Common myeloid progenitor, CD34-positive (primary cell): ENCODE measurements at regions of chr22 and their contacts with region 1.

Region 1: GRCh38 chr22:24423519-24424000 is 3.8 kb upstream of the ADORA2A start:
- DNase-seq: no peak
- H3K4me3 ChIP-seq: peak overlapping the region in 5 of 7 experiments; percentile 23 to 73 (median 63)
- H3K27ac ChIP-seq: no peak overlapping the region
- H3K4me1 ChIP-seq: peaks cover 3 to 45% (median 37%) of the 10 kb centered on the region in 4 experiments
- H3K27me3 ChIP-seq: peaks cover 0 to 11% (median 0%) of the 10 kb centered on the region in 5 experiments

Region 2: DNA sequence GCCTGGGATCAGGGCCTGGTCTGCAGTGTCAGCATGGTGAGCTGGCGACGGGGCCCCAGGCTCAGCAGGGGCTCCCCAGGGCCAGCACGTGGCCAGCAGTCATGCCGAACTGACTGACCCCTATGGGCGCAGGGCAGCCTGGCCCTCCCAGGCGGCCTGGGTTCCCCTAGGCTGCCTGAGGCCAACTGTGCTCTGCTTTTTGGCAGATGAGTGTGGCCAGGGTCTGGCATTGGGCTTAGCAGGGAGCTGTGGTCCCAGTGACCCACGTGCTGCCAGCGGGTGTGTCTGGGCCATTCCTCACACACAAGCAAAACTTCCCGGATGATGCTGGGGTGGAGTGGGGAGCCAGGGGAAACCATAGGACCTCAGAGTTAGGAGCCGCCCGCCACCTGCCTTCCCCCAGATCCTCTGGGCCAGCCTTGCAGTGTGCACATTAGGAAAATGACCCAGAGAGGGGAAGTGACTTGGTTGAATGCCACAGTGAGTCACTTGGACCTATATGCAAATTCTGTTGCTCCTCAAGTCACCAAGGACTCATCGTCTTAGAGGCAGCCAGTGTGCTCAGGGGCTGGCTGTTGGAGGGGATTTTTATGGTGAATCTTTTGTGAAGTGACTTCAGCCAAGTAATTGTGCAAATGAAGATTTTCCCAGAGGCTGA is 10.4 kb after region 1 on chr22:
- CTCF ChIA-PET with region 1: interaction called, 10 read pairs
- POLR2A ChIA-PET with region 1: no interaction called
- DNase-seq: peak; percentile 68 to 94 (median 92)
- H3K4me3 ChIP-seq: no peak overlapping the region
- H3K27ac ChIP-seq: peak overlapping the region; percentile 16 to 74
- H3K4me1 ChIP-seq: peaks cover 14 to 60% (median 46%) of the 10 kb centered on the region in 4 experiments
- H3K27me3 ChIP-seq: no peaks in the 10 kb centered on the region

Region 3: GRCh38 chr22:24455751-24456426 is 32.3 kb after region 1 on chr22:
- CTCF ChIA-PET with region 1: interaction called, 10 read pairs
- POLR2A ChIA-PET with region 1: no interaction called
- DNase-seq: no peak
- H3K4me3 ChIP-seq: no peak overlapping the region
- H3K27ac ChIP-seq: no peak overlapping the region
- H3K4me1 ChIP-seq: peaks cover 2 to 27% (median 20%) of the 10 kb centered on the region in 4 experiments
- H3K27me3 ChIP-seq: no peaks in the 10 kb centered on the region

Region 4: GRCh38 chr22:24486501-24486921 is 63.0 kb after region 1 on chr22:
- CTCF ChIA-PET with region 1: interaction called, 14 read pairs
- POLR2A ChIA-PET with region 1: no interaction called
- DNase-seq: peak in 2 of 3 donors; percentile 86 to 90
- H3K4me3 ChIP-seq: no peak overlapping the region
- H3K27ac ChIP-seq: no peak overlapping the region
- H3K4me1 ChIP-seq: peaks cover 0 to 11% (median 5%) of the 10 kb centered on the region in 4 experiments
- H3K27me3 ChIP-seq: no peaks in the 10 kb centered on the region

Region 5: DNA sequence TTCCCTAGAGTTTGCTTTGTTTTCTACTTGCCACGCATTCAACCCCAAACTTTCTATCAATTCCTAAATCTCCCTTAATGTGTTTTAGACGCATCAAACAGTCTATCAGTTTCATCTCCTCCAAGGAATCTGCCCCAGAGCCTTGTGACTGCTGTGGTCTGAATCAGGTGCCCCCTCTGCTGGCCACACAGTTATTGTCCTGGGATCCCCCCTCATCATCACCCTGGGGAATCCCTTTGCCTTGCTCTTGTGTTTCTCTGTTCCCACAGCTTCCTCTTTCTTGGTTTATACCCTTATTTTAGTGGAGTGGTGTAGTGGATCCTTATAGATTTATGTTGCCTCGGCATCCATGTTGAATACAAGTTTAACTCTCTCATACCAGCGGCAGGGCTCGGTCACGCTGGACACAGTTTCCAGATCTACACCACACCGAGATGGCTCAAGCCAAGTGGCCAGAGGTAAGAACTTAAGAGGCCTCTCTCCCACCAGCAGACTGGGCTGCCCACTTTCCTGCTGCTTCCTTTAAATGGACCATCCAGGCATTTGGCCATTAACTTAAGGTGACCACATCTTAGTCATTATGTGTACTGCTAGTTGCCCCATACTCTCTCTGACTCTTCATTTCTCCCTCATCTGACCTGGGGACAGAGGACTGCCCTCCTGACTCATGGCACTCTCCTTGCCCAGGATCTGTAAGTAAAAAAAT is 79.7 kb after region 1 on chr22:
- CTCF ChIA-PET with region 1: interaction called, 13 read pairs
- POLR2A ChIA-PET with region 1: interaction called, 4 read pairs
- DNase-seq: peak; percentile 88 to 95 (median 94)
- H3K4me3 ChIP-seq: no peak overlapping the region
- H3K27ac ChIP-seq: no peak overlapping the region
- H3K4me1 ChIP-seq: peaks cover 12 to 52% (median 44%) of the 10 kb centered on the region in 4 experiments
- H3K27me3 ChIP-seq: no peaks in the 10 kb centered on the region

Region 6: GRCh38 chr22:24525416-24526037 is 102.0 kb after region 1 on chr22:
- CTCF ChIA-PET with region 1: interaction called, 109 read pairs
- POLR2A ChIA-PET with region 1: interaction called, 3 read pairs
- DNase-seq: peak; percentile 76 to 89 (median 84)
- H3K4me3 ChIP-seq: no peak overlapping the region
- H3K27ac ChIP-seq: no peak overlapping the region
- H3K4me1 ChIP-seq: peaks cover 0 to 9% (median 7%) of the 10 kb centered on the region in 4 experiments
- H3K27me3 ChIP-seq: no peaks in the 10 kb centered on the region